B cell (primary cell): ENCODE measurements at regions of chr19 and their contacts with region 1.

Region 1: DNA sequence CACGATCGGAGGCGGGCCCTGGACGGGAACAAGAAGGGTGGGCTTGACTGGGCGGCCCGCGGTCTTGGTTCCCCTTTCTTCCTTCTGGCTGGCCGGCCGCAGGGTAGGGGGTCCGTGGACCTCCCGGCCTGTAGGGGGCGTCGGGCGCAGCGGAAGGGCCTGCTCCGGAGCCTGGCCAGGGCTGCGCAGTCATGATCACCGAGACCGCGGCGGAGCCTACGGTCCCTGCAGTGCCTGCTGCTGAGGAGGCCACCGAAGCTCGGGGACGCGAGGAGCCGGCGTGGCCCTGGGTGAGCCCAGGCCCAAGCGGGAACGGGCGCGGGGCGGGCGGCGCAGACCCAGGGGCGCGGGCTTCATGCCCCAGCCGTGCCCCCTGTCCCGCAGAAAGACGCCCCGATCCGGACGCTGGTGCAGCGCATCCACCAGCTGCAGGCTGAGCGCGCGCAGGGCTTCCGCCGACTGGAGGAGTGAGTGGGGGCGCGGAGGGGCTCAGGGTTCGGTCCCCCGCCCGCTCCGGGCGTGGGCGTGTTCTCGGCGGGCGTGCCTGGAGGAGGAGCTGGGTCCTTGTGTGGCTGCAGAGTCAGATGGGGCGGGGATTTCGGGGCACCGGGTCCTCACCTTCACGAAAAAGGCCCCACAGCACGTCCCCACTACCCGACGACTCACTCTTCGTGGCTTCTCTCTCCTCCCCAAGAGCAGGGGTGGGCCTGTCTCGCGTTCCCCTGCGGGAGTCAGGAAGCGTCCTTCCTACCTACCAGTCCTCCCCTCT is at the start of gene REX1BD:
- DNase-seq: peak; percentile 93
- ATAC-seq: peak; percentile 78
- H3K4me3 ChIP-seq: peak within 1 kb of the TSS; percentile 46 to 92 (median 77)
- H3K4me3 Mint-ChIP-seq: peak within 1 kb of the TSS; percentile 76
- H3K27ac ChIP-seq: peak within 1 kb of the TSS; percentile 73 to 82
- H3K27ac Mint-ChIP-seq: peak within 1 kb of the TSS; percentile 89
- H3K4me1 ChIP-seq: peaks cover 18 to 43% of the 10 kb centered on the region in 2 donors
- H3K4me1 Mint-ChIP-seq: peaks cover 30% of the 10 kb centered on the region
- H3K27me3 ChIP-seq: no peaks in the 10 kb centered on the region
- H3K27me3 Mint-ChIP-seq: no peaks in the 10 kb centered on the region
- CTCF ChIP-seq: peak; percentile 80
- total RNA-seq, gene REX1BD: 78.1 and 90.9 TPM in 2 replicates

Region 2: GRCh38 chr19:18557474-18558201 is 31.2 kb before region 1 on chr19 and contains the start of gene KXD1:
- CTCF ChIA-PET with region 1: interaction called, 6 read pairs
- POLR2A ChIA-PET with region 1: interaction called, 7 read pairs
- intact Hi-C with region 1: loop called (anchors 1 kb)
- DNase-seq: peak; percentile 99
- ATAC-seq: peak; percentile 99
- H3K4me3 ChIP-seq: peak within 1 kb of the TSS; percentile 73 to 98 (median 93)
- H3K4me3 Mint-ChIP-seq: peak within 1 kb of the TSS; percentile 90
- H3K27ac ChIP-seq: peak within 1 kb of the TSS; percentile 82 to 97
- H3K27ac Mint-ChIP-seq: peak within 1 kb of the TSS; percentile 90
- H3K4me1 ChIP-seq: peaks cover 15 to 25% of the 10 kb centered on the region in 2 donors
- H3K4me1 Mint-ChIP-seq: peaks cover 21% of the 10 kb centered on the region
- H3K27me3 ChIP-seq: no peaks in the 10 kb centered on the region
- H3K27me3 Mint-ChIP-seq: no peaks in the 10 kb centered on the region
- CTCF ChIP-seq: no peak
- total RNA-seq, gene KXD1: 88.5 and 90.0 TPM in 2 replicates

Region 3: GRCh38 chr19:18636183-18636968 is 47.6 kb after region 1 on chr19:
- CTCF ChIA-PET with region 1: interaction called, 4 read pairs
- POLR2A ChIA-PET with region 1: interaction called, 4 read pairs
- intact Hi-C with region 1: loop called (anchors 1 kb)
- DNase-seq: peak; percentile 98
- ATAC-seq: peak; percentile 87
- H3K4me3 ChIP-seq: peak overlapping the region in 4 of 5 experiments; percentile 71 to 95 (median 82)
- H3K4me3 Mint-ChIP-seq: peak overlapping the region; percentile 95
- H3K27ac ChIP-seq: peak overlapping the region; percentile 46 to 84
- H3K27ac Mint-ChIP-seq: peak overlapping the region; percentile 95
- H3K4me1 ChIP-seq: peaks cover 12 to 27% of the 10 kb centered on the region in 2 donors
- H3K4me1 Mint-ChIP-seq: peaks cover 25% of the 10 kb centered on the region
- H3K27me3 ChIP-seq: no peaks in the 10 kb centered on the region
- H3K27me3 Mint-ChIP-seq: peaks cover 3% of the 10 kb centered on the region
- CTCF ChIP-seq: no peak

Region 4: DNA sequence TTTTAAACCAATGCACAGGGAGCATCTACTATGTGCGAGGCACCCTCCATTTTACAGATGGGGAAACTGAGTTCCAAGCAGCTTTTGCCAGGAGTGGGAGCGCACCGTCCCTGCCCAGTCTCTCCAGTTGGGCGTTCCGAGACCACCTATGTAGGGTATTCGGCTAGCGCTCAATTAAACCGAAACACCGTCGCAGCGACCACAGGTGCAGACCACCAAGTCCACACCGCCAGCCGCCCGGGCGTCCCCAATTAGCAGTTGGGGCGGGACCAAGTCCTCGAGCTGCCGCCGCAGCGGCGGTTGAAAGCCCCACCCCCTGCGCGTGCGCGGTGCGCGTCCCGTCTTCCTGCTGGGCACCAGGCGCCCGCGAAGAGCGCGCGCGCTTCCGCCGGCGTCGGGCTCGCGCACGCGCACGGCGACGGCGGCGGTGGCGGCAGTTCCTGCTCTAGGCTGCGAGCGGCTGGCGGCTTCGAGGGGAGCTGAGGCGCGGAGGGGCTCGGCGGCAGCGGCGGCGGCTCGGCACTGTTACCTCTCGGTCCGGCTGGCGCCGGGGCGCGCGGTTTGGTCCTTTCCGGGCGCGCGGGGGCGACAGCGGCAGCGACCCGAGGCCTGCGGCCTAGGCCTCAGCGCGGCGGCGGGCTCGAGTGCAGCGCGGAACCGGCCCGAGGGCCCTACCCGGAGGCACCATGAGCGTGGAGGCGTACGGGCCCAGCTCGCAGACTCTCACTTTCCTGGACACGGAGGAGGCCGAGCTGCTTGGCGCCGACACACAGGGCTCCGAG is 242.9 kb after region 1 on chr19 and contains the start of gene UPF1:
- CTCF ChIA-PET with region 1: interaction called, 6 read pairs
- POLR2A ChIA-PET with region 1: interaction called, 8 read pairs
- intact Hi-C with region 1: loop called (anchors 2 kb)
- DNase-seq: peak; percentile 97
- ATAC-seq: peak; percentile 81
- H3K4me3 ChIP-seq: peak within 1 kb of the TSS; percentile 63 to 82 (median 73)
- H3K4me3 Mint-ChIP-seq: peak within 1 kb of the TSS; percentile 91
- H3K27ac ChIP-seq: peak within 1 kb of the TSS; percentile 60 to 90
- H3K27ac Mint-ChIP-seq: peak within 1 kb of the TSS; percentile 92
- H3K4me1 ChIP-seq: peaks cover 34 to 39% of the 10 kb centered on the region in 2 donors
- H3K4me1 Mint-ChIP-seq: peaks cover 36% of the 10 kb centered on the region
- H3K27me3 ChIP-seq: no peaks in the 10 kb centered on the region
- H3K27me3 Mint-ChIP-seq: peaks cover 8% of the 10 kb centered on the region
- CTCF ChIP-seq: no peak
- total RNA-seq, gene UPF1: 95.1 and 98.6 TPM in 2 replicates

Region 5: DNA sequence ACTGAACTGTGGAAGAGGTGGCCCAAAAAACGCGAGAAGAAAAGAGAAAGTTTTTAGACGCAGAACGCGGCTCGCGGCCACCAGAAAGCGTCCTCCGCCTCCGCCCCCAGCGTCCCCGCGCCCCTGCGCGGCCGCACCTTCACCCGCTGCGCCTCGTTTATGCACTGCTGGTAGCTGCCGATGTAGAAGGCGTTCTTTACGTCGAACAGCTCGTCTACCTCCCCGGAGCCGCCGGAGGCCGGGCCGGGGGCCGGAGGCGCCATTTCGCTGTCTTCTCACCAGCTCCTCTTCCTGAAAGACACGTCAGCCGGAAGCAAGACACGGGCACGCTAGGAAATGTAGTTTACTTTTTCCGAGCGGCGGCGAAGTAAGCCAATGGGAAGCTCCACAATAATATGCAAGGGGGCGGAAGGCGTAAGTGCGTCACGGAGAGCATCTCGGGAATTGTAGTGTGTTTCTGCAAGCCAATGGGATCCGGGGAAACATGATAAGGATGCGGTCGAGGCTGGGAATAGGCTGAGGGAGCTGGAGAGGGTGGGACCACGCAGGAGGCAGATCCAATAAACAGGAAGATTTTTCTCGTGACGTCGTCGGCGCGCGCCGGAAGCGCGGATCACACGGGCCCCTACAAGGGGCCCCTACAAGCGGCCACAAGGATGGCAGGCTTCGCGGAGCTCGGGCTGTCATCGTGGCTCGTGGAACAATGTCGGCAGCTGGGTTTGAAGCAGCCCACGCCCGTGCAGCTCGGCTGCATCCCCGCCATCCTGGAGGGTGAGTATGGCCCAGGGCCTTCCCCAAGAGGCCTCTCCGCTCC is 330.5 kb after region 1 on chr19 and contains the starts of genes COPE and DDX49:
- CTCF ChIA-PET with region 1: interaction called, 7 read pairs
- POLR2A ChIA-PET with region 1: interaction called, 12 read pairs
- intact Hi-C with region 1: loop called (anchors 2 kb)
- DNase-seq: peak; percentile 100
- ATAC-seq: peak; percentile 97
- H3K4me3 ChIP-seq: peak within 1 kb of the TSS; percentile 93 to 100 (median 97)
- H3K4me3 Mint-ChIP-seq: peak within 1 kb of the TSS; percentile 83
- H3K27ac ChIP-seq: peak within 1 kb of the TSS; percentile 84 to 93
- H3K27ac Mint-ChIP-seq: peak within 1 kb of the TSS; percentile 80
- H3K4me1 ChIP-seq: peaks cover 17 to 27% of the 10 kb centered on the region in 2 donors
- H3K4me1 Mint-ChIP-seq: peaks cover 41% of the 10 kb centered on the region
- H3K27me3 ChIP-seq: no peaks in the 10 kb centered on the region
- H3K27me3 Mint-ChIP-seq: no peaks in the 10 kb centered on the region
- CTCF ChIP-seq: no peak
- total RNA-seq, gene COPE: 153 and 154 TPM in 2 replicates
- total RNA-seq, gene DDX49: 38.9 and 39.5 TPM in 2 replicates